Posterior cingulate gyrus (tissue), 11 donors: ENCODE measurements at regions of chr2 and their contacts with region 1.

Region 1: GRCh38 chr2:131673392-131674173 is 145.9 kb downstream of the CCDC74A start:
- DNase-seq: peak; percentile 74 to 98 (median 85)

Region 2: DNA sequence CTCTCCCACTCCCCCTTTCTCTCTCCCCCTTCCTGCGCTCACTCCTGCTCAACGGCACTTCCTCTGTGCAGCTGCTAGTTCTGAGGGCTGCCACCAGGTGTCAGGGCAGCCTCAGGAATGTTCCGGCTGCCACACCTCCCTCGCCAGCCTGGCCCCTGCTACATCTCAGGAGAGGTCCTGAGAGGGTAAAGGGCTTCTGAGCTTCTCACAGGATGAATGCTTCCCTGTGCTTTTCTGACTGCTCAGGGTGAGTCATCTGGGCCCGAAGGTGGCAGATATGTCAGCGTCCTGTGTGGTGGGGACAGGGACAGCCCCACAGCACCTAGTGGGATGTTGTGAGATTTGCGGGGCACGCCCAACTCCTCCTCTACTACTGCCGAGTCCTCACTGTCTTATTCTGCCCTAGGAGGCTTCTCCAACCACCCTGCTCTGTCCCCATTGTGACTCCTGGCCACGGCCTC is 519.5 kb before region 1 on chr2:
- intact Hi-C with region 1: loop called (anchors 2 kb)
- DNase-seq: peak; percentile 32 to 96 (median 60)

Region 3: GRCh38 chr2:131413148-131413747 is 260.3 kb before region 1 on chr2:
- intact Hi-C with region 1: loop called (anchors 5 kb)
- DNase-seq: no peak

Region 4: GRCh38 chr2:131801210-131801744 is 127.7 kb after region 1 on chr2:
- intact Hi-C with region 1: loop called (anchors 2 kb)
- DNase-seq: peak in 2 of 10 donors; percentile 67 to 79